Right ventricle myocardium inferior (tissue), 1 donor: ENCODE measurements at regions of chr12 and their contacts with region 1.

Region 1: DNA sequence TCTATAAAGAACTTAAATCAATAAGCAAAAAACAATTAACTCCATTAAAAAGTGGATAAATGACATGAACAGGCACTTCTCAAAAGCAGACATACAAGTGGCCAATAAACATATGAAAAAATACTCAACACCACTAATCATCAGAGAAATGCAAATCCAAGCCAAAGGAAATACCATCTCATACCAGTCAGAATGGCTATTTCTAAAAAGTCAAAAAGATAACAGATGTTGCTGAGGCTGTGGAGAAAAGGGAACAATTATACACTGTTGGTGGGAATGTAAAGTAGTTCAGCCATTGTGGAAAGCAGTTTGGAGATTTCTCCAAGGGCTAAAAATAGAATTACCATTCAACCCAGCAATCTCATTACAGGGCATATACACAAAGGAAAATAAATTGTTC is 234.5 kb upstream of the PLXNC1 start:
- DNase-seq: no peak
- ATAC-seq: no peak

Region 2: DNA sequence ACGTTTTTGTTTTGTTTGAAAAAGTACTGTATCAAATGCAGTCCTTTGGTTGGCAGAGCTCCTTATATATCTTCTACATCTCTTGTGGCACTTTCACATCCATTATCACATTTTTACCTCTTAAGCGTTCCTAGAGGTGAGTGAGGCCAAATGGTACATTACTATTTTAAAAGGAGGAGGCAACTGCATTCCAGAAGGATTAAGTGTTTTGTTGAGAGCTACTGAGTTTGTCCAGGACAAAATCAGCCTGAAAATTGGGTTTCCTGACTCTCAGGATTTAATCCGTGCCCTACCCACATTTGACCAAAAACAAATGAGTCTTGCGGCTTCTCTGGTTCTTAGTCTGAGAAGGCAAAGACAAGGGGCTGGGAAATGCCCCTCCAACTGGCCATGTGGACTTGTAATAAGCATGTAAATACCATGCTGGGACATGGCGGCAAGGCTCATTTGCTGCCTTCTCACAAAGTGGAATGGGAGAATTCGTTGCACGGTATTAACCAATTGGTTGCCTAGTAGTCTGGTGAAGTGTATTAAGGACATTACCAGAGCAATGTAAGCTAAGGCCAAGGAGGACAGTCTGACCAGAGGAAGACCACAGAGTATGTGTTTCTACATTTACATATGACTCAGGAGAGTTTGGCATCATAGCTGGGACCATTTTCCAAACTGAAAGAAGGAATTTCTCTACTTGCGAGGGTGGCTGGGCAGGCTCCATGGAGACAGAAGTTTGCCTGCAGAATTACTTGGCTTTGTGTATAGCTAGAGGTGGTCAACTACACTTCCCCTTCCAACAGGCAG is 58.8 kb after region 1 on chr12:
- intact Hi-C with region 1: loop called (anchors 5 kb)
- DNase-seq: no peak
- ATAC-seq: no peak

Region 3: DNA sequence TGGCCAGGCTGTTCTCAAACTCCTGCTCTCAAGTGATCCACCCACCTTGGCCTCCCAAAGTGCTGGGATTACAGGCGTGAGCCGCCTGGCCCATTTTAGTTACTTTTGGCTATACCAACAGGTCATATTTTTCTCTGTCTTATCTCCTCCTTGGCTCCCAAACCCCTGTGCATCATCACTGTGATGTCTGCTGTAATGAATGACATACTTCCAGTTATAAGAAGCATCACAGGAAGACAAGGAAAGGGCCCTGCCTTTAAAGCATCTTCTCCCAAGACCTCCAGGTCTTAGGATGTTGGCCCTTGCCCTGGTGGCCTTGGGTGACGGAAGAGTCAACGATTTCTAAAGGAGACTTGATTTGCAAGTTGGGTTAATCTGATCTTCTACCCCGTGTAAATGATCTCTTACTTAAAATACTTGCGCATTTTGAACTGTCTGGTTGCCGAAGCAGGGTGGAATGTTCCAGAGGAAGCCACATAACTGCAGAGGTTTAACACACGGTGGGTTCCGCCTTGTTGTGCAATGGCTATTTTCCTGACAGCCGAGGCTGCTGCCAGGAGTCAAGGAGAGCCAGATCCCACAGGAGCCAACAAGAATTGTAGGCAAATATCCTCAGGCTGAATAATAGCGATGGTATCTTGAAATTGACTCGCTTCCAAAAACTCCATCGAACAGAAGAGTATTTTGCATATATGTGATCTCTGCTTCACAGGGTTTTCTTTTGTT is 178.8 kb after region 1 on chr12:
- intact Hi-C with region 1: no loop called
- DNase-seq: no peak
- ATAC-seq: no peak